IMR-90 (cell line): ENCODE measurements at regions of chr11 and their contacts with region 1.

Region 1: DNA sequence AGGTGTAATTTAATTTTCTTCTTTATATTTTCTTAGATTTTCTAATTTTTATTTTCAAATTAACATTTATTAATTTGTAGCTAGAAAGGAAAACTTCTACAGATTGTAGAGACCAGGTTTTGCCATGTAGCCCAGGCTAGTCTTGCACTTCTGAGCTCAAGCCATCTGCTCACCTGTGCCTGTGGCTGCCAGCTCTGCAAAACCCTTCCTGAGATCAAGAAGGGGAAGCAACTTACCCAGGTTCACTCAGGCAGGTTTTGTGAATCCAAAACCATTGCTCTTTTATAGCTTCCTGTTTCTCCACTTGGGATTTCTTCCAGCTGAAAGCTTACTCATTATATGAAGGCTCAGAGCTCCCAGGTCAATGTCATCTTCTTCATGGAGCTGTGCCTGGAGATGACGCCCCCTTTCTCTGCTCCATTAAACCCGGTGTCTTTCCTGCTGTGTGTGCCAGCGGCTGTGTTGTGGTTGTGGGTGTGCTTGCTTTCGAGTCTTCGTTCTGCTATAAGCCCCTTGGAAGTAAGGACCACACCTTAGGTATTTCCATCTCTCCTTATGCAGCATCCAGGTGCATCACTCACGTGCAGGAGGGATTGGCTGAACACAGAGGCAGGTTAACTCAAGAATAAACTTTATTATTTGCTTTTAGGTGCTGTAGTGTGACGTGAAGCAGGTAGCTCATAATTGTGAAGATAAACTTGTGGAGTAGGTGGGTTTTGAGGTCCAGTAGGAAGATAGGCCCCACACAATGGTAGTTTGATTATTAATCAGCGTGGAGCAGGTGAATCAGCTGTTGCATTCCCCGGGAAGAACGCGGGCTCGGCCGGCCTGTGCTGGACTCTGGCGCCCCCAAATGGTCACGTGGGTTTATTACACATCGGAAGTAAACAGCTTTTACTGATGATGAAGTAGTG is 42.2 kb upstream of the INCENP start:
- DNase-seq: peak; percentile 66
- ATAC-seq: peak; percentile 99
- H3K4me3 ChIP-seq: no peak overlapping the region
- H3K27ac ChIP-seq: no peak overlapping the region
- H3K4me1 ChIP-seq: peaks cover 2% of the 10 kb centered on the region; the same call in 1 of the 2 replicates
- H3K27me3 ChIP-seq: no peaks in the 10 kb centered on the region
- CTCF ChIP-seq: peak; percentile 98
- POLR2A ChIP-seq: peak; percentile 45; the same call in 1 of the 2 replicates
- RAD21 ChIP-seq: peak; percentile 100

Region 2: GRCh38 chr11:61871158-61871597 is 210.5 kb before region 1 on chr11:
- CTCF ChIA-PET with region 1: interaction called, 9 read pairs
- POLR2A ChIA-PET with region 1: no interaction called
- dilution Hi-C with region 1: no loop called
- in situ Hi-C with region 1: no loop called
- intact Hi-C with region 1: loop called (anchors 1 kb)
- DNase-seq: peak; percentile 67
- ATAC-seq: peak; percentile 98
- H3K4me3 ChIP-seq: no peak overlapping the region
- H3K27ac ChIP-seq: no peak overlapping the region
- H3K4me1 ChIP-seq: peaks cover 2% of the 10 kb centered on the region
- H3K27me3 ChIP-seq: no peaks in the 10 kb centered on the region
- CTCF ChIP-seq: peak; percentile 96
- POLR2A ChIP-seq: no peak
- RAD21 ChIP-seq: peak; percentile 94

Region 3: DNA sequence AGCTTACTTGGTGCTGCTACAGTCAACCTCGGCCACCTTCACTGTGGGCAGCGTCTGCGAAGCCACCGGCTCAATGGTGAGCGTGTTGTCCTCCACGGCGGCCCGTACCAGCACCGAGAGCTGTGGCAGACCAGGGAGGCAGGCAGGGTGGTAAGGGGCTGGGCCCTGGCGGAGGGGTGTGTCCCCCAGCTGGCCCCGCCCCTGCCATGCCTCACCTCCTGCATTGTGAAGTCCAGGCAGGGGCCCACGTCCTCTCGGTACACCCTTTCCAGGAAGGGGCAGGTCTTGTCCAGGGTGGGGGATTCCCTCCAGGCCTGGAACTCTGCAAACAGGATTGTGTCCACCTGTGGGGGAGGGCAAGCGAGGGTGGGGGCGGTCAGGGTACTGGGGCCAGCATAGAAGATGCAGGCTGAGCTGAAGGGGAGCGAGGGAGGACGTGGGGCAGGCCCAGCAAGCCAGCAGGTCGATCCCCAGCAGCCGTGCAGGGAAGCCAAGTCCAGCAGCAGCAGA is 177.0 kb before region 1 on chr11:
- CTCF ChIA-PET with region 1: interaction called, 39 read pairs
- POLR2A ChIA-PET with region 1: no interaction called
- dilution Hi-C with region 1: no loop called
- in situ Hi-C with region 1: no loop called
- intact Hi-C with region 1: no loop called
- DNase-seq: no peak
- ATAC-seq: no peak
- H3K4me3 ChIP-seq: no peak overlapping the region
- H3K27ac ChIP-seq: no peak overlapping the region
- H3K4me1 ChIP-seq: no peaks in the 10 kb centered on the region
- H3K27me3 ChIP-seq: no peaks in the 10 kb centered on the region
- CTCF ChIP-seq: no peak
- POLR2A ChIP-seq: no peak
- RAD21 ChIP-seq: no peak

Region 4: DNA sequence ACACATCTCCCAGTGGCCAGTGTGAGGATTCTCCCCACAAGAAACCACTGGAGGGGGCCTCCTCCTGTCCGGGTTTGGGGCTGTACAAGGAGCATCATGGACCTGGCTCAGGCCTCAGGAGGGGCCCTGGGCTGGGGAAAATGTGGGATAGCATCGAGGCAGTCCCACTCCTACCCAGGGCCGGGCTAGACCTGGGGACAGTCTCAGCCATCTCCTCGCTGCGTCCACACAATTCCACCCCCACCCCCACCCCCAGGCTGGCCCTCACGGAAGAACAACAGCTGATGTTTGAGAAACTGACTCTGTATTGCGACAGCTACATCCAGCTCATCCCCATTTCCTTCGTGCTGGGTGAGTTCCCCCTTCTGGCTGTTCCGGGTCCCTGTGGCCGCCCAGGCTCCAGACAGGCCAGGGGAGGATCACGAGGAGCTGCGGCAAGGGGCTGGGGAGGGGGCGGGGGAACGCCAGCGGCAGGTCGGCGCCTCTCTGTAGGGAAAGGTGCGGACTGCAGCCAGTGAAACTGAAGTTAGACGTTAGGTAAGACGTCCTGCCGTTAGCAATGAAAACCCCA is 126.7 kb before region 1 on chr11:
- CTCF ChIA-PET with region 1: interaction called, 22 read pairs
- POLR2A ChIA-PET with region 1: no interaction called
- dilution Hi-C with region 1: no loop called
- in situ Hi-C with region 1: loop called (anchors 10 kb)
- intact Hi-C with region 1: no loop called
- DNase-seq: peak; percentile 87
- ATAC-seq: peak; percentile 86
- H3K4me3 ChIP-seq: peak overlapping the region; percentile 10
- H3K27ac ChIP-seq: peak overlapping the region; percentile 92
- H3K4me1 ChIP-seq: peaks cover 11% of the 10 kb centered on the region
- H3K27me3 ChIP-seq: no peaks in the 10 kb centered on the region
- CTCF ChIP-seq: peak; percentile 37
- POLR2A ChIP-seq: no peak
- RAD21 ChIP-seq: peak; percentile 44

Region 5: GRCh38 chr11:62108017-62108750 is 26.5 kb after region 1 on chr11:
- CTCF ChIA-PET with region 1: interaction called, 38 read pairs
- POLR2A ChIA-PET with region 1: no interaction called
- dilution Hi-C with region 1: no loop called
- in situ Hi-C with region 1: no loop called
- intact Hi-C with region 1: no loop called
- DNase-seq: peak; percentile 74
- ATAC-seq: peak; percentile 30
- H3K4me3 ChIP-seq: no peak overlapping the region
- H3K27ac ChIP-seq: no peak overlapping the region
- H3K4me1 ChIP-seq: peaks cover 12% of the 10 kb centered on the region
- H3K27me3 ChIP-seq: no peaks in the 10 kb centered on the region
- CTCF ChIP-seq: peak; percentile 91
- POLR2A ChIP-seq: no peak
- RAD21 ChIP-seq: peak; percentile 87